Activated CD4-positive, alpha-beta T cell treated with anti-CD3 and anti-CD28 coated beads, Interleukin-2, amount 10 ng/mL, durations not matched to agents 24 days and 14 days (primary cell): ENCODE measurements at regions of chr12 and their contacts with region 1.

Region 1: GRCh38 chr12:112409064-112409905 is at the start of gene RPL6:
- DNase-seq: peak; percentile 94
- H3K4me3 Mint-ChIP-seq: peak within 1 kb of the TSS; percentile 93
- H3K27ac Mint-ChIP-seq: peak within 1 kb of the TSS; percentile 100
- H3K4me1 Mint-ChIP-seq: peaks cover 27% of the 10 kb centered on the region
- H3K27me3 Mint-ChIP-seq: no peaks in the 10 kb centered on the region
- total RNA-seq, gene RPL6: 1,820 and 1,848 TPM in 2 replicates

Region 2: DNA sequence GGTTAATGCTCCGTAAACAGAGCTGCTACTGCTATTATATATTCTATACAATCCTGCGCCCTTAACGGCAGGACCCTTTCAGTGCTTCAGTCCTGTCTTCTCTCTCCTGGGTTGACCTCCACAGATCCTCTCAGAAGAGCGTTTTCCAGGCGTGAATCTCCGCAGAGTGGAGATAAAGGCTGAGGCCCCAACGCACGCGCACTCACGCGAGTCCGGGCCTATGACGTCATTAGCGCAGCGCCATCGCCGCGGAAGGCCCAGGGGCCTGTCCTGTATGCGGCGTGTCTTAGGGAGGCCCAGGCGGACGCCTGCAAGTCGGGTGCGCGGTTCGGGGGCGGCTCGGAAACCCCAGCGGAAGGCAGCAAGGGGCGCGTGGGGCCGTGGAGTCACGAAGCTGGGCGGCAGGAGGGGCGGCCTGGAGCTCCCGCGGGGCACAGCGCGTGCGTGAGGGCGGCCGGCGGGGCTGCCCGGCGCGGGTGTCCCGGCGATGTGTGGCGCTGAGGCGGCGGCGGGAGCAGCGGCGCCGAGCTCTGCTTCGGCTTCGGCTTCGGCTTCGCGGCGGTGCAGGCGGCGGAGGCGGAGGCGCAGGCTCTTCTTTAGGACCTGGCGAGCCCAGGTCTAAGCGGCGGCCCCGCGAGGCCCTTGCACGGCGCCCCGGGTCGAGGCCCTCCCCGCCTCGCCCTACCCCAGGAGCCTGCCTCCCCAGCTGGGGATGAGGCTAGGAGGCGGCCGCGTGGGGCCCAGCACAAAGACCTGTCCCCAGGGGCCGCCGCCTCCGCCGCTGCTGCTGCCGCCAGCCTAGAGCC is 567.3 kb before region 1 on chr12 and contains the start of gene MAPKAPK5:
- intact Hi-C with region 1: loop called (anchors 1 kb)
- DNase-seq: peak; percentile 99
- H3K4me3 Mint-ChIP-seq: peak within 1 kb of the TSS; percentile 98
- H3K27ac Mint-ChIP-seq: peak within 1 kb of the TSS; percentile 98
- H3K4me1 Mint-ChIP-seq: peaks cover 40% of the 10 kb centered on the region
- H3K27me3 Mint-ChIP-seq: peaks cover 2% of the 10 kb centered on the region
- total RNA-seq, gene MAPKAPK5: 76.0 and 80.2 TPM in 2 replicates

Region 3: GRCh38 chr12:112125250-112125999 is 283.9 kb before region 1 on chr12 and contains the start of gene TRAFD1:
- intact Hi-C with region 1: loop called (anchors 2 kb)
- DNase-seq: peak; percentile 100
- H3K4me3 Mint-ChIP-seq: peak within 1 kb of the TSS; percentile 82
- H3K27ac Mint-ChIP-seq: peak within 1 kb of the TSS; percentile 88
- H3K4me1 Mint-ChIP-seq: peaks cover 32% of the 10 kb centered on the region
- H3K27me3 Mint-ChIP-seq: peaks cover 4% of the 10 kb centered on the region
- total RNA-seq, gene TRAFD1: 45.6 and 48.3 TPM in 2 replicates

Region 4: GRCh38 chr12:112198120-112198733 is 211.1 kb before region 1 on chr12:
- intact Hi-C with region 1: loop called (anchors 1 kb)
- DNase-seq: peak; percentile 86
- H3K4me3 Mint-ChIP-seq: no peak overlapping the region
- H3K27ac Mint-ChIP-seq: no peak overlapping the region
- H3K4me1 Mint-ChIP-seq: no peaks in the 10 kb centered on the region
- H3K27me3 Mint-ChIP-seq: no peaks in the 10 kb centered on the region

Region 5: GRCh38 chr12:112837629-112838197 is 428.4 kb after region 1 on chr12:
- intact Hi-C with region 1: no loop called
- DNase-seq: no peak
- H3K4me3 Mint-ChIP-seq: no peak overlapping the region
- H3K27ac Mint-ChIP-seq: no peak overlapping the region
- H3K4me1 Mint-ChIP-seq: no peaks in the 10 kb centered on the region
- H3K27me3 Mint-ChIP-seq: peaks cover 19% of the 10 kb centered on the region